Activated CD4-positive, alpha-beta memory T cell treated with anti-CD3 and anti-CD28 coated beads for 36 hours (primary cell): ENCODE measurements at regions of chr14 and their contacts with region 1.

Region 1: DNA sequence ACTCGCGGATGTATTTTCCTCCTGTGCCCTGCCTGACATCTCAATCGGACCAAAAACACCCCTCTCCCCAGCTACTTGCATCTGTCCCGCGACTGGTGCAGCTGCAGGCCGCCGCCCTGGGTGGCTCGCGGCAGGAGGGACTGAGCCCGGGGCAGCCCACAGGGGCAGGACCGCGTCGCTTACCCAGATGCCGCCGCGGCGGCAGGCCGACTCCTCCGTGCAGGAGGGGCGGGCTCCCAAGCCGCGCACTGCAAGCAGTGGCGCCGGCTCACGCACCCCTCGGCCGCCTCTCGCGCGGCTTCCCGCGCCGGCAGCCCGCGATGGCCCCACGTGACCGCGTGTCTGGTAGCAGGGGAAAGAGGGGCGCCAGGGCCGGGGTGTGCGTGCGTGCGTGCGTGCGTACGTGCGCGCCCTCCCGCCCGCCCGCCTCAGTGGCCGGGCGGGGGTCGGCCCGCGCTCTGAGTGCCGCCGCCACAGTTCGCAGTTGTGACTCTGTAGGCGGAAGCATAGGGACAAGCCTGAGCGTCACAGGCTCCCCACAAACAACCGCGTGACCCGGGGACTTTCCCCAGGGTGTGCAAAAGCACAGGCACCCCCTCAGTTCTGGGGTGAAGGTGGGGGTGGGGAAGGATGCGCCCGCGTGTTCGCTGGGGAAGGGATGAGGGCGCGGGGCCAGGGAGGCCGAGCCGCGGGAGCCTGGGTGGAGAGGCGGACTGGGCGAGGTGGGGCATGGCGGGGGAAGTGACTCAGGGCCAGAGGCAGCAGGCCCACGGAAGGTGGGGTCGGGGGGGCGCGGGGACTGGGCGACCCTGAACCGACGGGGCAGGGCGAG is at the start of gene ZBTB25:
- DNase-seq: peak; percentile 95
- H3K4me3 Mint-ChIP-seq: peak within 1 kb of the TSS; percentile 95
- H3K27ac Mint-ChIP-seq: peak within 1 kb of the TSS; percentile 100
- H3K4me1 Mint-ChIP-seq: peaks cover 53% of the 10 kb centered on the region
- H3K27me3 Mint-ChIP-seq: no peaks in the 10 kb centered on the region
- total RNA-seq, gene ZBTB25: 24.2 to 27.5 TPM

Region 2: GRCh38 chr14:63543000-63543825 is 960.5 kb before region 1 on chr14 and contains the start of gene PPP2R5E:
- CTCF ChIA-PET with region 1: no interaction called
- POLR2A ChIA-PET with region 1: no interaction called
- intact Hi-C with region 1: loop called (anchors 5 kb)
- DNase-seq: peak; percentile 99
- H3K4me3 Mint-ChIP-seq: peak within 1 kb of the TSS; percentile 82
- H3K27ac Mint-ChIP-seq: peak within 1 kb of the TSS; percentile 86
- H3K4me1 Mint-ChIP-seq: peaks cover 31% of the 10 kb centered on the region
- H3K27me3 Mint-ChIP-seq: no peaks in the 10 kb centered on the region
- total RNA-seq, gene PPP2R5E: 37.7 to 37.8 TPM

Region 3: GRCh38 chr14:64338616-64339316 is 164.9 kb before region 1 on chr14:
- CTCF ChIA-PET with region 1: interaction called, 5 read pairs
- POLR2A ChIA-PET with region 1: interaction called, 6 read pairs
- intact Hi-C with region 1: loop called (anchors 1 kb)
- DNase-seq: peak; percentile 93
- H3K4me3 Mint-ChIP-seq: peak overlapping the region; percentile 91
- H3K27ac Mint-ChIP-seq: peak overlapping the region; percentile 95
- H3K4me1 Mint-ChIP-seq: peaks cover 23% of the 10 kb centered on the region
- H3K27me3 Mint-ChIP-seq: no peaks in the 10 kb centered on the region

Region 4: GRCh38 chr14:64421166-64421565 is 82.5 kb before region 1 on chr14:
- CTCF ChIA-PET with region 1: no interaction called
- POLR2A ChIA-PET with region 1: interaction called, 9 read pairs
- intact Hi-C with region 1: loop called (anchors 2 kb)
- DNase-seq: no peak
- H3K4me3 Mint-ChIP-seq: no peak overlapping the region
- H3K27ac Mint-ChIP-seq: no peak overlapping the region
- H3K4me1 Mint-ChIP-seq: peaks cover 25% of the 10 kb centered on the region
- H3K27me3 Mint-ChIP-seq: no peaks in the 10 kb centered on the region

Region 5: DNA sequence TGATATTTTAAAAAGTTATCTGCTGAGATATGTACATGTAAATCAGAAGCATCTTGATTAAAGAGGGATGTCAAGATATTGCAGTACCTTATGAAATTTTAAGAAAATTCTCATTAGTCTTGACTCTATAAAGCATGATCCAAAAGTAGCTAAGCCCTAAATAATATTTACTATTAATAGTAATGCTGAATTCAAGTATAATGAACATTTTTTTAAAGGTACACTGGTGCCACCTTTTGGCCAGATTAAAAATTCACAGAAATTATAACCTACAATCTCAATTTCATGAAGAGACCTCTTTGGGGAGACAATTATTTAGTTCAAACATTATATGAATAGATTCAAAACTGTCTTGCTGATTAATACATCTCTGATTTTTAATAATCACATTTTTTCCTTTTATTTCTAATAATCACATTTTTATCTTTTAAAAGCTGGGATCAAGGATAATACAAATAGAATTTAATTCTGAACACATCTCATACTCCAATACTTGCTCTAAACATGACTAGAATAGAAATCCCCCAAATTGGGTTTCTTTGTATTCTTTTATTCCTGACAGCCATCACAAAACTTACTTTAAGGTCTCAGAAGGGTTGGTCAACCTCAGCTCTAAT is 25.0 kb before region 1 on chr14:
- CTCF ChIA-PET with region 1: interaction called, 12 read pairs
- POLR2A ChIA-PET with region 1: interaction called, 18 read pairs
- intact Hi-C with region 1: no loop called
- DNase-seq: no peak
- H3K4me3 Mint-ChIP-seq: no peak overlapping the region
- H3K27ac Mint-ChIP-seq: no peak overlapping the region
- H3K4me1 Mint-ChIP-seq: peaks cover 36% of the 10 kb centered on the region
- H3K27me3 Mint-ChIP-seq: no peaks in the 10 kb centered on the region

Region 6: GRCh38 chr14:64914237-64914971 is 410.7 kb after region 1 on chr14 and contains the start of gene CHURC1:
- CTCF ChIA-PET with region 1: no interaction called
- POLR2A ChIA-PET with region 1: no interaction called
- intact Hi-C with region 1: loop called (anchors 10 kb)
- DNase-seq: peak; percentile 98
- H3K4me3 Mint-ChIP-seq: peak within 1 kb of the TSS; percentile 78
- H3K27ac Mint-ChIP-seq: peak within 1 kb of the TSS; percentile 90
- H3K4me1 Mint-ChIP-seq: peaks cover 44% of the 10 kb centered on the region
- H3K27me3 Mint-ChIP-seq: peaks cover 3% of the 10 kb centered on the region
- total RNA-seq, gene CHURC1: 61.7 to 62.6 TPM